IMR-90 (cell line): ENCODE measurements at regions of chr12 and their contacts with region 1.

Region 1: GRCh38 chr12:27014085-27014858 is at the start of gene TM7SF3:
- DNase-seq: peak; percentile 83
- ATAC-seq: peak; percentile 97
- H3K4me3 ChIP-seq: peak within 1 kb of the TSS; percentile 68
- H3K27ac ChIP-seq: peak within 1 kb of the TSS; percentile 75
- H3K4me1 ChIP-seq: no peaks in the 10 kb centered on the region
- H3K27me3 ChIP-seq: no peaks in the 10 kb centered on the region
- CTCF ChIP-seq: peak; percentile 98
- POLR2A ChIP-seq: no peak
- RAD21 ChIP-seq: peak; percentile 79
- total RNA-seq, gene TM7SF3: 45.3 and 46.6 TPM in 2 replicates

Region 2: GRCh38 chr12:26614020-26614616 is 400.2 kb before region 1 on chr12:
- CTCF ChIA-PET with region 1: no interaction called
- POLR2A ChIA-PET with region 1: no interaction called
- dilution Hi-C with region 1: no loop called
- in situ Hi-C with region 1: no loop called
- intact Hi-C with region 1: no loop called
- DNase-seq: peak; percentile 26
- ATAC-seq: no peak
- H3K4me3 ChIP-seq: no peak overlapping the region
- H3K27ac ChIP-seq: no peak overlapping the region
- H3K4me1 ChIP-seq: no peaks in the 10 kb centered on the region
- H3K27me3 ChIP-seq: no peaks in the 10 kb centered on the region
- CTCF ChIP-seq: peak; percentile 57
- POLR2A ChIP-seq: no peak
- RAD21 ChIP-seq: peak; percentile 72

Region 3: GRCh38 chr12:26853303-26854030 is 160.8 kb before region 1 on chr12:
- CTCF ChIA-PET with region 1: no interaction called
- POLR2A ChIA-PET with region 1: no interaction called
- dilution Hi-C with region 1: no loop called
- in situ Hi-C with region 1: no loop called
- intact Hi-C with region 1: loop called (anchors 5 kb)
- DNase-seq: peak; percentile 56
- ATAC-seq: peak; percentile 94
- H3K4me3 ChIP-seq: no peak overlapping the region
- H3K27ac ChIP-seq: no peak overlapping the region
- H3K4me1 ChIP-seq: 0 out of 2 replicates have a peak, but pooled peaks cover 5% of the 10 kb centered on the region
- H3K27me3 ChIP-seq: peaks cover 8% of the 10 kb centered on the region; the same call in 1 of the 2 replicates
- CTCF ChIP-seq: peak; percentile 82
- POLR2A ChIP-seq: no peak
- RAD21 ChIP-seq: peak; percentile 71

Region 4: DNA sequence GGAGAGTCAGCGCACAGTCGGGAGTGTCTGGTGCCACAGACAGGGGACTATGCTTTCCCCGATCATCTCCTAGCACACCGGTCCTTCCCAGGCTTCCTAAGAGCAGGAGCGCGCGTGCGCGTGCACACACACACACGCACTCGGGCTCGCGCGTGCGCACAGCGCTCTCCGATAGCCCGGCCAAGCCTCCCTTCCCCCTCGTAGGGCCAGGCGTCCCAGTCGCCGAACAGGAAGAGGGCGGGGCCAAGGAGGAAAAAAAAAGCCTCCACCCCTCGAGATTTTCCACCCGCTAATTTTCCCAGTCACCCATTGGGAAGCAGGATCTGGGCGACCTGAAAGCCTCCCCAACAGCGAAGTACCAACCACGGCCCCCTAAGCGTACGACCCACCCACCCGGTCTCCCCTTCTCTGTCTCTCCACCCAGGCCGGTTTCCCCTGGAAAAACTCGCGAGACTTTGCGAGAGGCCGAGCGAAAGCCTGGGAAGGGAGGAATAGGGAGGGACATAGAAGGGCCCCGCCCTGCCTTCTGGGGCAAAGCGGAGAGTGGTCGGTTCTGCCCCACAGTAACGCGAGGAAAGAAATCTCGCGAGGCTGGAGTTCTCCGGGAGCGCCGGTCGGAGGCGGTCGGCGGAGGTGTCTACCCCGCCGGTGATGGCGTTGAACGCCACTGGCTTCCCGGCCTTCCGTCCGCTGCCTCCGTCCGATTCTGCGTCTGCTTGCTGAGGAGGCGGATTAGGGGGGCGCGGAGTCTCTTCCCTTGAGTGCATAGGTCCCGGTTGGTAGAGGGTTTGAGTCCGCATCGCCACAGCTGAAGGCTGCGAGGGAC is 76.2 kb before region 1 on chr12 and contains the starts of genes FGFR1OP2 and INTS13:
- CTCF ChIA-PET with region 1: no interaction called
- POLR2A ChIA-PET with region 1: no interaction called
- dilution Hi-C with region 1: no loop called
- in situ Hi-C with region 1: no loop called
- intact Hi-C with region 1: loop called (anchors 5 kb)
- DNase-seq: peak; percentile 99
- ATAC-seq: peak; percentile 95
- H3K4me3 ChIP-seq: peak within 1 kb of the TSS; percentile 89
- H3K27ac ChIP-seq: peak within 1 kb of the TSS; percentile 92
- H3K4me1 ChIP-seq: peaks cover 2% of the 10 kb centered on the region
- H3K27me3 ChIP-seq: no peaks in the 10 kb centered on the region
- CTCF ChIP-seq: no peak
- POLR2A ChIP-seq: peak; percentile 97
- RAD21 ChIP-seq: no peak
- total RNA-seq, gene FGFR1OP2: 31.0 and 56.4 TPM in 2 replicates
- total RNA-seq, gene INTS13: 31.9 and 46.9 TPM in 2 replicates

Region 5: GRCh38 chr12:27243804-27244683 is 229.8 kb after region 1 on chr12 and contains the start of gene STK38L:
- CTCF ChIA-PET with region 1: interaction called, 3 read pairs
- POLR2A ChIA-PET with region 1: no interaction called
- dilution Hi-C with region 1: no loop called
- in situ Hi-C with region 1: no loop called
- intact Hi-C with region 1: loop called (anchors 2 kb)
- DNase-seq: peak; percentile 93
- ATAC-seq: peak; percentile 99
- H3K4me3 ChIP-seq: peak within 1 kb of the TSS; percentile 75
- H3K27ac ChIP-seq: peak within 1 kb of the TSS; percentile 81
- H3K4me1 ChIP-seq: peaks cover 2% of the 10 kb centered on the region; the same call in 1 of the 2 replicates
- H3K27me3 ChIP-seq: no peaks in the 10 kb centered on the region
- CTCF ChIP-seq: peak; percentile 49
- POLR2A ChIP-seq: peak; percentile 95
- RAD21 ChIP-seq: peak; percentile 58
- total RNA-seq, gene STK38L: 7.2 and 15.3 TPM in 2 replicates

Region 6: DNA sequence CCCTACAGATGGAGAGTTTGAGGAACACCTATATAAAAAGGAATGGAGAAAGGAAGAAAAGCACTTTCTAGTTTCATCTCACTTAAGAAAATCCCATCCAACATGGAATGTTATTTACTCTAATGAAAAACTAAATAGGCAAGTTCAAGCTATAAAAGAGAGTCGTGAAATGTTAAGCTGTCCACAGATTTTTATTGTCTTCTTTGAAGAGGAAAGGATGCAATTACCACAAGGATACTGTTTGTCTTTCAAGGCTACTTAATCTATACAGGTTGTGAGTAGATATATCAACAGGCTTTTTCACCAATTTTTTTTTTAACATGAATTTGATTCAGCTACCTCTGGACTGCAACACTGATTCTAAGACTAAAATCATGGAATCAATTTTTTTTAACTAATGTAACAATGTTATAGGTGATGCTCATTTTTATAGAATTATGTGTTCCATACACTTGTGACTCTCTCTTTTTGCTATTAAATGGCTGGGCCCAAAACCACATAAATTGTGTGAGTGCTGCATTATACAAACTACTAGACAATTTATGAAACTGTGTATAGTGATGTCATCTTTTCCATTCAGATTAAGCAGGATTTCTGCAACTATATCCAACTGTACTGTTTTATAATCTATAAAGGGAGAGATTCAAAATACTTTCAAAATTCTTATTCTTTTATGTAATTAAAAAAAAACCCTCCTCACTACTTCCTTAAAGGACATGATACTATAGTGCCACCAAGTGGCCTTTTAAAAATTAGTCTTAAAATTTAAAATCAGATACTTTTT is 291.6 kb after region 1 on chr12:
- CTCF ChIA-PET with region 1: interaction called, 3 read pairs
- POLR2A ChIA-PET with region 1: no interaction called
- dilution Hi-C with region 1: no loop called
- in situ Hi-C with region 1: loop called (anchors 5 kb)
- intact Hi-C with region 1: loop called (anchors 1 kb)
- DNase-seq: peak; percentile 65
- ATAC-seq: peak; percentile 35; the same call in 1 of the 2 replicates
- H3K4me3 ChIP-seq: no peak overlapping the region
- H3K27ac ChIP-seq: no peak overlapping the region
- H3K4me1 ChIP-seq: peaks cover 4% of the 10 kb centered on the region
- H3K27me3 ChIP-seq: no peaks in the 10 kb centered on the region
- CTCF ChIP-seq: peak; percentile 64
- POLR2A ChIP-seq: no peak
- RAD21 ChIP-seq: peak; percentile 71